H1 (cell line): ENCODE measurements at regions of chr17 and their contacts with region 1.

Region 1: GRCh38 chr17:48724251-48725003 is 1.4 kb downstream of the PRAC2 start:
- DNase-seq: peak in 1 of 2 experiments; percentile 88
- H3K4me3 ChIP-seq: no peak overlapping the region
- H3K27ac ChIP-seq: no peak overlapping the region
- H3K4me1 ChIP-seq: peaks cover 11 to 32% (median 15%) of the 10 kb centered on the region in 4 experiments; a peak in 6 of 7 replicates
- H3K27me3 ChIP-seq: peaks cover 98 to 100% (median 99%) of the 10 kb centered on the region in 4 experiments
- CTCF ChIP-seq: peak; percentile 60 to 70 (median 68)
- EP300 ChIP-seq: no peak
- POLR2A ChIP-seq: no peak
- RAD21 ChIP-seq: peak; percentile 73 to 74

Region 2: DNA sequence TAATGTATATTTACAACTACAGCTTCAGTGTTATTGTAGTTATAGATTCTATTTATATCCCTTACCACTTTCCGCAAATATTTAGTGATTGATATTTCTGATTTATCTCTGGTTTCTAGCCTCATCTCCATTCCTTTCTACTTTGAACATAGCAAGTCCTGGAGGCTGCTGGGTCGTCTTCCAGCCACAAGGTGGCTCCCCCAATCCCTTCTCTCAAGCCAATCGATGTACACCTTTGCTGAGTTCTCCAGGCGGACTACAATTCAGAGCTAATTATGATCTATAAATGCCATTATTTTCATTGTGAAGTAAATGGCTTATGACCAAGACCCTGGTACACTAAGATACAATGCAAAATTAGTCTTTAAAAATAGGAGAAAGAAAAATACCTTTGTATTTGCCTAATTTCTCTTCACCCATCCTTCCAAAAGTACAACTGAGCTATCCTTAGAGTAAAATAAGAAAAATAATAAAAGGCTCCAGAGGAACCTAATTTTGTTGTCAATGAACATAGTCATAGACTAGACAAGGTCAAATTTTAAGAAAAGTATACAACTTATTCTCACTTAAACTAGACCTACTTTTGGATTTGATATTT is 416.5 kb before region 1 on chr17:
- CTCF ChIA-PET with region 1: no interaction called
- POLR2A ChIA-PET with region 1: no interaction called
- DNase-seq: peak in 1 of 2 experiments; percentile 15
- H3K4me3 ChIP-seq: no peak overlapping the region
- H3K27ac ChIP-seq: no peak overlapping the region
- H3K4me1 ChIP-seq: no peaks in the 10 kb centered on the region
- H3K27me3 ChIP-seq: no peaks in the 10 kb centered on the region; a peak in 2 of 7 replicates
- CTCF ChIP-seq: peak; percentile 78 to 87 (median 81)
- EP300 ChIP-seq: no peak
- POLR2A ChIP-seq: no peak
- RAD21 ChIP-seq: peak; percentile 58 to 69

Region 3: GRCh38 chr17:48492401-48493298 is 231.8 kb before region 1 on chr17:
- CTCF ChIA-PET with region 1: no interaction called
- POLR2A ChIA-PET with region 1: no interaction called
- DNase-seq: peak in 1 of 2 experiments; percentile 79
- H3K4me3 ChIP-seq: peak overlapping the region in 3 of 4 experiments; percentile 25 to 59 (median 32); a peak in 4 of 8 replicates
- H3K27ac ChIP-seq: no peak overlapping the region
- H3K4me1 ChIP-seq: peaks cover 3 to 7% (median 4%) of the 10 kb centered on the region in 4 experiments; a peak in 5 of 7 replicates
- H3K27me3 ChIP-seq: peaks cover 20 to 56% (median 35%) of the 10 kb centered on the region in 4 experiments
- CTCF ChIP-seq: peak; percentile 67 to 76 (median 69)
- EP300 ChIP-seq: no peak
- POLR2A ChIP-seq: no peak
- RAD21 ChIP-seq: peak; percentile 65 to 80

Region 4: DNA sequence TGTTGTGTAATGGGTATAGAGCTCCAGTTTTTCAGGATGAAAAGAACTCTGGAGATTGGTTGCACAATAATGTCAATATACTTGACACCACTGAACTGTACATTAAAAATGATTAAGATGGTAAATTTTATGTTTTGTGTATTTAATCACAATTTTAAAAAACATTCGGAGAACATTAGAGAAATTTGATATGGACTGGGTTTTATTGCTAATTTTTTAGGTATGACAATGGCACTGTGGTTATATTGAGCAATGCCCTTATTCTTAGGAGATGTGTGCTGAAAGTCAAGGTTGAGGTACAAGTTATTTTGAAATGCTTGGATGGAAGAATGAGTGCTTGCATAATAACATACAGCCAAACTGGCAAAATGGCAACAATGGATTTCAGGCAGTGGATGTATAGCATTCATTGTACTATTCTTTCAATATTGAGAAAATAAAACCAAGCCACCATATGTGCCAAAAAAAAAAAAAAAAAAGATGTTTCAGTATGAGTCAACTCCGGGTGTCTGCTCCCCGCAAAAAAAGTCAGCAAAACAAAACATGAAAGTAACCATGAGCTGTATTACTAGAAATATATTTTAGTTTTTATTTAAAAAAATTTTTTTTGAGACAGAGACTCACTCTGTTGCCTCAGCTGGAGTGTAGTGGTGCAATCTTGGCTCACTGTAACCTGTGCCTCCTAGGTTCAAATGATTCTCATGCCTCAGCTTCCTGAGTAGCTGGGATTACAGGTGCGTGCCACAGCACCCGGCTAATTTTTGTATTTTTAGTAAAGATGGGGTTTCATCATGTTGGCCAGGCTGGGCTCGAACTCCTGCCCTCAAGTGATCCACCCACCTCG is 213.4 kb before region 1 on chr17:
- CTCF ChIA-PET with region 1: no interaction called
- POLR2A ChIA-PET with region 1: no interaction called
- DNase-seq: no peak
- H3K4me3 ChIP-seq: no peak overlapping the region
- H3K27ac ChIP-seq: no peak overlapping the region
- H3K4me1 ChIP-seq: no peaks in the 10 kb centered on the region; a peak in 4 of 7 replicates
- H3K27me3 ChIP-seq: peaks cover 0 to 10% (median 0%) of the 10 kb centered on the region in 4 experiments; a peak in 4 of 7 replicates
- CTCF ChIP-seq: no peak
- EP300 ChIP-seq: no peak
- POLR2A ChIP-seq: no peak
- RAD21 ChIP-seq: no peak

Region 5: GRCh38 chr17:48577946-48578615 is 146.3 kb before region 1 on chr17 and contains the start of gene HOXB4:
- CTCF ChIA-PET with region 1: no interaction called
- POLR2A ChIA-PET with region 1: no interaction called
- DNase-seq: no peak
- H3K4me3 ChIP-seq: peak within 1 kb of the TSS in 2 of 4 experiments; percentile 10 to 44; a peak in 3 of 8 replicates
- H3K27ac ChIP-seq: no peak within 1 kb of the TSS
- H3K4me1 ChIP-seq: peaks cover 0 to 13% (median 4%) of the 10 kb centered on the region in 4 experiments; a peak in 5 of 7 replicates
- H3K27me3 ChIP-seq: peaks cover 99 to 100% (median 100%) of the 10 kb centered on the region in 4 experiments
- CTCF ChIP-seq: no peak
- EP300 ChIP-seq: no peak
- POLR2A ChIP-seq: no peak
- RAD21 ChIP-seq: no peak
- total RNA-seq, gene HOXB4: not detected in 2 replicates

Region 6: GRCh38 chr17:48636177-48637018 is 88.0 kb before region 1 on chr17:
- CTCF ChIA-PET with region 1: interaction called, 17 read pairs
- POLR2A ChIA-PET with region 1: no interaction called
- DNase-seq: peak; percentile 85 to 98
- H3K4me3 ChIP-seq: peak overlapping the region in 1 of 4 experiments; percentile 13; a peak in 1 of 8 replicates
- H3K27ac ChIP-seq: no peak overlapping the region
- H3K4me1 ChIP-seq: peaks cover 0 to 5% (median 1%) of the 10 kb centered on the region in 4 experiments; a peak in 3 of 7 replicates
- H3K27me3 ChIP-seq: peaks cover 98 to 100% (median 99%) of the 10 kb centered on the region in 4 experiments
- CTCF ChIP-seq: peak; percentile 77 to 82 (median 79)
- EP300 ChIP-seq: no peak
- POLR2A ChIP-seq: no peak
- RAD21 ChIP-seq: peak; percentile 34 to 48; a peak in 3 of 4 replicates

Region 7: GRCh38 chr17:48711102-48711501 is 13.3 kb before region 1 on chr17:
- CTCF ChIA-PET with region 1: interaction called, 45 read pairs
- POLR2A ChIA-PET with region 1: no interaction called
- DNase-seq: no peak
- H3K4me3 ChIP-seq: no peak overlapping the region
- H3K27ac ChIP-seq: no peak overlapping the region
- H3K4me1 ChIP-seq: peaks cover 0 to 2% (median 0%) of the 10 kb centered on the region in 4 experiments; a peak in 1 of 7 replicates
- H3K27me3 ChIP-seq: peaks cover 1 to 39% (median 20%) of the 10 kb centered on the region in 4 experiments
- CTCF ChIP-seq: no peak
- EP300 ChIP-seq: no peak
- POLR2A ChIP-seq: no peak
- RAD21 ChIP-seq: no peak

Region 8: GRCh38 chr17:48756830-48757251 is 32.4 kb after region 1 on chr17:
- CTCF ChIA-PET with region 1: interaction called, 34 read pairs
- POLR2A ChIA-PET with region 1: interaction called, 6 read pairs
- DNase-seq: no peak
- H3K4me3 ChIP-seq: no peak overlapping the region
- H3K27ac ChIP-seq: no peak overlapping the region
- H3K4me1 ChIP-seq: peaks cover 0 to 7% (median 3%) of the 10 kb centered on the region in 4 experiments; a peak in 4 of 7 replicates
- H3K27me3 ChIP-seq: peaks cover 63 to 88% (median 80%) of the 10 kb centered on the region in 4 experiments
- CTCF ChIP-seq: no peak
- EP300 ChIP-seq: no peak
- POLR2A ChIP-seq: no peak
- RAD21 ChIP-seq: no peak

Region 9: DNA sequence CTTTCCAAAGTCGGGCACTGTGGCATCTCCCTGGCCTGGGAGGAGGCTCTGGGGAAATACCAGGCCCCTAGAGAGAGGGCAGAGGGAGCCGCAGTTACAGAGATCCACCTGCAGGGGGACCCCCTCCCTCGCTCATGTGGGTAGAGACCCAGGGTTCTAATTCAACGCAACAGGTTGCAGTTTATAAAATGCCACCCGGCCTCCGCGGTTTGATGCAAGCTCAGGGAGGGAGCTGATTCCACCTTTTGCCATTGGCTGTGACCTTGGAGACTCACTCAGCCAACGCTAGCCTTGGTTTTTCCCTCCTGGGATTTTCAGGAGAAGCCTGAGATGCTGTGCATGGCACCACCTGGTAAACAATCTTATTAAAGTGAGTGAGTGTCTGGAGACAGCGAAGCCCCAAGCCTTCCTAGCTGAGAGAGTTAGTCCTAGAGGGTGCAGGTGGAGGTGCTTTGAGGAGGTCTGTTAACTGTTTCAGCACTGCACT is 80.5 kb after region 1 on chr17:
- CTCF ChIA-PET with region 1: interaction called, 32 read pairs
- POLR2A ChIA-PET with region 1: no interaction called
- DNase-seq: peak; percentile 68 to 97
- H3K4me3 ChIP-seq: peak overlapping the region in 1 of 4 experiments; percentile 35; a peak in 3 of 8 replicates
- H3K27ac ChIP-seq: no peak overlapping the region
- H3K4me1 ChIP-seq: no peaks in the 10 kb centered on the region; a peak in 2 of 7 replicates
- H3K27me3 ChIP-seq: peaks cover 0 to 2% (median 0%) of the 10 kb centered on the region in 4 experiments; a peak in 1 of 7 replicates
- CTCF ChIP-seq: peak; percentile 90 to 93 (median 90)
- EP300 ChIP-seq: no peak
- POLR2A ChIP-seq: no peak
- RAD21 ChIP-seq: peak; percentile 98

Region 10: DNA sequence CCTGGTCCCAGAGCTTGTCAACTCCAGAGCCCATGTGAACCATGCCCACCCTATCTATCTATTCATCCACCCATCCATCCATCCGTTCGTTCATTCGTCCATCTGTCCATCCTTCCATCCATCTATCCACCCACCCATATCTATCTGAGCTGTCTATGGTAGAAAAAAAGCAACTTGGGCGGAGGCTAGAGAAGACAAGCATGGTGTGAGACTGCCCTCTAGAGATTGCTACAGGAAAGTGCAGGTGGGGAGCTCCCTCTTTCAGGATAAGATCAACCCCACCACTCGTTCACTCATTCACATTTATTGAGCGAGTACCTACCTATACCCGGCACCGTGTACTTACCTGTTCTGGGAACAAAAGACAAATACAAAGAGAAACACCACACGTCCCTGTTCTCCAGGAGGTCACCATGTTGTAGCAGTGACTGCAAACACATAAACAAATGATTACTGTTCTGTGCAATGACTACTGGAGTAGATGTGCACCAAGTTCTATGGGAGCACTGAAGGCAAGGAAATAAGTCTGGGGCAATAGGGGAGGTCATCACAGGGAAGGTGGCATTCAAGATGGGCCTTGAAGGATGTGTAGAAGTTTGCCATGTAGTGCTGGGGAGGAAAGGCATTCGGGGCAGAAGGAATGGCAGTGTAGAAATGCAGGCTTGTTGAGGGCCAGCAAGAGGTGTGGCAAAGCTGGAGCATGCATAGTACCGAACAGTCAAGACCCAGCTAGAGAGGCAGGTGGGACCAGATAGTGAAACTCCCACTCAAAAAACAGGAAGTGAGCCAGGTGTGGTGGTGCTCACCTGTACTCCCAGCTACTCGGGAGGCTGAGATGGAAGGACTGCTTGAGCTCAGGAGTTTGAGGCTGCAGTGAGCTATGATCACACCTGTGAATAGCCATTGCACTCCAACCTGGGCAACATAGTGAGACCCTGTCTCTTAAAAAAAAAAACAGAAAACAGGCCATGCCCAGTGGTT is 154.8 kb after region 1 on chr17:
- CTCF ChIA-PET with region 1: interaction called, 89 read pairs
- POLR2A ChIA-PET with region 1: no interaction called
- DNase-seq: peak in 1 of 2 experiments; percentile 61
- H3K4me3 ChIP-seq: no peak overlapping the region
- H3K27ac ChIP-seq: no peak overlapping the region
- H3K4me1 ChIP-seq: no peaks in the 10 kb centered on the region
- H3K27me3 ChIP-seq: no peaks in the 10 kb centered on the region; a peak in 1 of 7 replicates
- CTCF ChIP-seq: peak; percentile 59 to 99 (median 91)
- EP300 ChIP-seq: no peak
- POLR2A ChIP-seq: no peak
- RAD21 ChIP-seq: peak; percentile 98 to 99